Vagina (tissue), 2 donors: ENCODE measurements at regions of chr19 and their contacts with region 1.

Region 1: GRCh38 chr19:38245826-38246498 is 10.2 kb downstream of the PPP1R14A start:
- DNase-seq: no peak
- H3K4me3 ChIP-seq: no peak overlapping the region
- H3K27ac ChIP-seq: no peak overlapping the region
- H3K4me1 ChIP-seq: peaks cover 8% of the 10 kb centered on the region
- H3K27me3 ChIP-seq: no peaks in the 10 kb centered on the region
- CTCF ChIP-seq: no peak
- POLR2A ChIP-seq: no peak

Region 2: GRCh38 chr19:37779127-37780005 is 466.6 kb before region 1 on chr19 and contains the start of gene ZNF573:
- intact Hi-C with region 1: no loop called
- DNase-seq: peak in 1 of 2 donors; percentile 86
- H3K4me3 ChIP-seq: peak within 1 kb of the TSS; percentile 82 to 83
- H3K27ac ChIP-seq: peak within 1 kb of the TSS; percentile 82
- H3K4me1 ChIP-seq: peaks cover 18% of the 10 kb centered on the region
- H3K27me3 ChIP-seq: no peaks in the 10 kb centered on the region
- CTCF ChIP-seq: no peak
- POLR2A ChIP-seq: no peak
- total RNA-seq, gene ZNF573: 6.6 TPM

Region 3: GRCh38 chr19:38335949-38336637 is 90.1 kb after region 1 on chr19:
- intact Hi-C with region 1: loop called (anchors 1 kb)
- DNase-seq: peak in 1 of 2 donors; percentile 97
- H3K4me3 ChIP-seq: peak overlapping the region; percentile 69 to 72
- H3K27ac ChIP-seq: peak overlapping the region; percentile 99
- H3K4me1 ChIP-seq: peaks cover 8% of the 10 kb centered on the region
- H3K27me3 ChIP-seq: no peaks in the 10 kb centered on the region
- CTCF ChIP-seq: no peak
- POLR2A ChIP-seq: peak in 1 of 2 donors; percentile 37